ENCODE measurements at regions of chr11 and their contacts with region 1.

Region 1: DNA sequence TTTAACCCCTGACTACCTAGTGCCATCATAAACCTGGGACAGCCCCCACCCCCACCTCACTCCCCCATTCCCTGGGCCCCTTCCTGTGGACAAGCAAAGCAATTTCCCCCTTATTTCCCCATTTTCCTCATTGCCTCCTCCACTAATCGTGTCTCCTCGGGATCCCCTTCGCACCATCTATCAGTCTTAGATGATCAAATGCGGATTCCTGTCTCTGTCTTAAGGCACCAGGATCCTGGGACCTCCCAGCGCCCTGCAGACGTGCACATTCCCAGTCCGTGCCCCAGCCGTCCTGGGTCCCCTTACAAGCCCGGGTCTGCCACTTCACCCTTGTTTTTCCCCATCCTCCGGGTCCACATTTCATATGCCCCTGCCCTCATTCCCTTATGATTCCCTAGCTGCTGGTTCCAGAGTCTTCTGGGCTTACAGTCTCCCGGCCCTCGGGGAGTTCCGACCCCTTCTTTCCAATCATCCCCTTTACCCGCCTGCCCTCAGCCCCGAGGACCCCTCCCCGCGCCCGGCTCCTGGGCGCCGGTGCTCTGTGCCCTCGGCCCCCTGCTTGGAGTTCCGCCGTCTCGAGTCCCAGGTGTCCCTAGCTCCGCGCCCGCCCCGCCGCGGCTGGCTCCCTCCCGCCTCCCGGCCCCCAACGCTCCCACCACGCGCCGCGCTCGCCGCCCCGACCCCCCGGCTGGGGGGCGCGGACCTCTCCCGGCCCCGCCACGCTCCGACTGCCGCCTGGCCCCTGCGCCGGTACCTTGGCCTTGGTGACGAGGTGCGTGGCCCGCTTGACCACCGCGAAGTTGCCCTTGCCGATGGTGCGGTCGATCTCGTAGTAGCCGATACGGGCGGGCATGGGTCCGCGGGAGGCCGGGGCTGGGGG is 599 bp downstream of the SIK3 start:
- DNase-seq: peak; percentile 28
- H3K4me3 ChIP-seq: peak overlapping the region; percentile 88 to 97
- H3K27ac ChIP-seq: peak overlapping the region; percentile 91 to 96
- H3K4me1 ChIP-seq: no peaks in the 10 kb centered on the region
- H3K27me3 ChIP-seq: no peaks in the 10 kb centered on the region
- CTCF ChIP-seq: no peak
- POLR2A ChIP-seq: no peak

Region 2: GRCh38 chr11:116879800-116880625 is 217.6 kb before region 1 on chr11:
- intact Hi-C with region 1: loop called (anchors 2 kb)
- DNase-seq: peak; percentile 26
- H3K4me3 ChIP-seq: no peak overlapping the region
- H3K27ac ChIP-seq: no peak overlapping the region
- H3K4me1 ChIP-seq: no peaks in the 10 kb centered on the region
- H3K27me3 ChIP-seq: no peaks in the 10 kb centered on the region
- CTCF ChIP-seq: peak in 3 of 4 experiments; percentile 57 to 67 (median 62)
- POLR2A ChIP-seq: no peak

Region 3: GRCh38 chr11:117180661-117181585 is 83.3 kb after region 1 on chr11:
- intact Hi-C with region 1: no loop called
- DNase-seq: peak; percentile 65
- H3K4me3 ChIP-seq: peak overlapping the region in 1 of 2 donors; percentile 99
- H3K27ac ChIP-seq: peak overlapping the region; percentile 98 to 99
- H3K4me1 ChIP-seq: peaks cover 15% of the 10 kb centered on the region
- H3K27me3 ChIP-seq: no peaks in the 10 kb centered on the region
- CTCF ChIP-seq: peak in 3 of 4 experiments; percentile 65 to 76 (median 67)
- POLR2A ChIP-seq: no peak

Measured in prostate gland (tissue), 2 donors.